Activated CD4-positive, alpha-beta T cell treated with anti-CD3 and anti-CD28 coated beads for 36 hours (primary cell): ENCODE measurements at regions of chr1 and their contacts with region 1.

Region 1: GRCh38 chr1:19882111-19883071 is at the start of gene OTUD3:
- DNase-seq: peak; percentile 96
- ATAC-seq: peak; percentile 98
- H3K4me3 Mint-ChIP-seq: peak within 1 kb of the TSS; percentile 79
- H3K27ac Mint-ChIP-seq: peak within 1 kb of the TSS; percentile 76
- H3K4me1 Mint-ChIP-seq: peaks cover 36% of the 10 kb centered on the region
- H3K27me3 Mint-ChIP-seq: peaks cover 4% of the 10 kb centered on the region
- total RNA-seq, gene OTUD3: 6.6 to 9.2 TPM

Region 2: GRCh38 chr1:19179597-19180264 is 702.7 kb before region 1 on chr1:
- CTCF ChIA-PET with region 1: no interaction called
- POLR2A ChIA-PET with region 1: no interaction called
- intact Hi-C with region 1: no loop called
- DNase-seq: peak; percentile 43
- ATAC-seq: peak; percentile 89
- H3K4me3 Mint-ChIP-seq: no peak overlapping the region
- H3K27ac Mint-ChIP-seq: peak overlapping the region; percentile 72
- H3K4me1 Mint-ChIP-seq: peaks cover 29% of the 10 kb centered on the region
- H3K27me3 Mint-ChIP-seq: no peaks in the 10 kb centered on the region

Region 3: GRCh38 chr1:19762175-19762779 is 120.1 kb before region 1 on chr1:
- CTCF ChIA-PET with region 1: interaction called, 5 read pairs
- POLR2A ChIA-PET with region 1: no interaction called
- intact Hi-C with region 1: loop called in 1 of 2 experiments (anchors 1 kb)
- DNase-seq: peak; percentile 62
- ATAC-seq: no peak
- H3K4me3 Mint-ChIP-seq: no peak overlapping the region
- H3K27ac Mint-ChIP-seq: no peak overlapping the region
- H3K4me1 Mint-ChIP-seq: peaks cover 19% of the 10 kb centered on the region
- H3K27me3 Mint-ChIP-seq: no peaks in the 10 kb centered on the region

Region 4: GRCh38 chr1:19799877-19800804 is 82.2 kb before region 1 on chr1 and contains the start of gene TMCO4:
- CTCF ChIA-PET with region 1: no interaction called
- POLR2A ChIA-PET with region 1: no interaction called
- intact Hi-C with region 1: loop called in 1 of 2 experiments (anchors 1 kb)
- DNase-seq: peak; percentile 73
- ATAC-seq: peak; percentile 59
- H3K4me3 Mint-ChIP-seq: peak within 1 kb of the TSS; percentile 75
- H3K27ac Mint-ChIP-seq: peak within 1 kb of the TSS; percentile 90
- H3K4me1 Mint-ChIP-seq: peaks cover 28% of the 10 kb centered on the region
- H3K27me3 Mint-ChIP-seq: no peaks in the 10 kb centered on the region
- total RNA-seq, gene TMCO4: 13.2 to 15.6 TPM

Region 5: DNA sequence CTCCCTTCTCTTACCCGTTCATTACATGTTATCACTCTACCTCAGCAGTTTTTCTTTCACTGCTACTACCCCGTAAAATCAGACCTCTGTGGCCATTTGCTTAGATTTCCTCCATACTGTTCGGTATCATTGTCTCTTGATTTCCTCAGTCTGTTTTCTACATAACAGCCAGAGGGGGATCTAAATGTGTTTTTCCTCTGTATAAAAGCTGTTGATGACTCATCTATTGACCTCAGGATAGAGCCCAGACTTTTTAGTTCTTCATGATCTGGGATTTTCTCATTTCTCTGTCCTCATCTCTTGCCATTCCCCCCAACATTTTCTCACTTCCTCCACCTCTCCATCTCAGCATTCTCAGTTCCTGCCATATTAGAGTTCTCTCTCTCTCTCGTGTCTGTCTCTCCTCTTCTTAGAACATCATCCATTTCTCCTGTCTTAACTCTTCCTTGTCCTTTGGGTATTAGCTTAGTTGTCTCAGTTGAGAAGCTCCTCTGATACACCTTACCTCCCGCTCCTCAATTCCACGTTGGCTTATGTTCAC is 10.3 kb after region 1 on chr1:
- CTCF ChIA-PET with region 1: interaction called, 20 read pairs
- POLR2A ChIA-PET with region 1: no interaction called
- intact Hi-C with region 1: no loop called
- DNase-seq: no peak
- ATAC-seq: no peak
- H3K4me3 Mint-ChIP-seq: no peak overlapping the region
- H3K27ac Mint-ChIP-seq: no peak overlapping the region
- H3K4me1 Mint-ChIP-seq: peaks cover 10% of the 10 kb centered on the region
- H3K27me3 Mint-ChIP-seq: no peaks in the 10 kb centered on the region

Region 6: GRCh38 chr1:19936061-19936750 is 53.8 kb after region 1 on chr1:
- CTCF ChIA-PET with region 1: no interaction called
- POLR2A ChIA-PET with region 1: no interaction called
- intact Hi-C with region 1: no loop called
- DNase-seq: no peak
- ATAC-seq: no peak
- H3K4me3 Mint-ChIP-seq: no peak overlapping the region
- H3K27ac Mint-ChIP-seq: no peak overlapping the region
- H3K4me1 Mint-ChIP-seq: no peaks in the 10 kb centered on the region
- H3K27me3 Mint-ChIP-seq: no peaks in the 10 kb centered on the region

Region 7: DNA sequence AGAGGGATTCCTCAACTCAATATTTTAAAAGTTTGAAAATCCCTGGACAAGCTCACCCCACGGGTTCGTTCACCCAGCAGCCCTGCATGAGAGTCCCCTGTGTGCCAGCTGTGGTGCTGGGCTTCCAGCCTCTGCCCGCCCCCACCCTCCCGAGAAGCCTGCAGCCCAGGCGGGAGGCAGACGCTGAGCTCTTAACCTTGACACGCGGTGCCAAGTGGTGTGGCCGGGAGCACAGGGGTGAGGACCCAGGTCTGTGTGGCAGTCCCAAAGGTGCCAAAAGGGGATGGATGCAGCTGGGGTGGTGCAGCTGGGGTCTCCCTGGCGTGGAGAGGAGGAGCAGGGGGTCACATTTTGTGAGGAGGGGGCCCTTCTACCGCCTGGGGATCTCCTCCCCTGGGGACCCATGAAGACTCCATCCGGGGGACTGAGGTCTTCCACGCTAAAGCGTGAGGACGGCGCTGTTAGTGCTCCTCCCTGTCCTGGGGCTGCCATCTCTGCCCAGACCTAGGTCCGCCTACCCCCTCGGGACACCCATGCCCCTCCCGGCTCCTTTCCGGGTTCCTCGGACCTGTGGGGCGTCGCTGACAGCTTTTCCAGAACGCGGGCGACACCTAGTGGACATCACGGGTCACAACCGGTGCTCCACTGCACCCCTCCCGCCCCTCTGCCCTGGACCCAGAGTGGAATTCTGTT is 269.7 kb after region 1 on chr1:
- CTCF ChIA-PET with region 1: interaction called, 13 read pairs
- POLR2A ChIA-PET with region 1: interaction called, 3 read pairs
- intact Hi-C with region 1: loop called in 1 of 2 experiments (anchors 1 kb)
- DNase-seq: peak; percentile 88
- ATAC-seq: peak; percentile 97
- H3K4me3 Mint-ChIP-seq: peak overlapping the region; percentile 48
- H3K27ac Mint-ChIP-seq: no peak overlapping the region
- H3K4me1 Mint-ChIP-seq: peaks cover 9% of the 10 kb centered on the region
- H3K27me3 Mint-ChIP-seq: no peaks in the 10 kb centered on the region

Region 8: GRCh38 chr1:20507564-20508410 is 625.4 kb after region 1 on chr1 and contains the start of gene MUL1:
- CTCF ChIA-PET with region 1: interaction called, 3 read pairs
- POLR2A ChIA-PET with region 1: no interaction called
- intact Hi-C with region 1: loop called in 1 of 2 experiments (anchors 2 kb)
- DNase-seq: peak; percentile 96
- ATAC-seq: peak; percentile 96
- H3K4me3 Mint-ChIP-seq: peak within 1 kb of the TSS; percentile 79
- H3K27ac Mint-ChIP-seq: peak within 1 kb of the TSS; percentile 65
- H3K4me1 Mint-ChIP-seq: peaks cover 17% of the 10 kb centered on the region
- H3K27me3 Mint-ChIP-seq: peaks cover 2% of the 10 kb centered on the region
- total RNA-seq, gene MUL1: 9.0 to 13.1 TPM

Region 9: DNA sequence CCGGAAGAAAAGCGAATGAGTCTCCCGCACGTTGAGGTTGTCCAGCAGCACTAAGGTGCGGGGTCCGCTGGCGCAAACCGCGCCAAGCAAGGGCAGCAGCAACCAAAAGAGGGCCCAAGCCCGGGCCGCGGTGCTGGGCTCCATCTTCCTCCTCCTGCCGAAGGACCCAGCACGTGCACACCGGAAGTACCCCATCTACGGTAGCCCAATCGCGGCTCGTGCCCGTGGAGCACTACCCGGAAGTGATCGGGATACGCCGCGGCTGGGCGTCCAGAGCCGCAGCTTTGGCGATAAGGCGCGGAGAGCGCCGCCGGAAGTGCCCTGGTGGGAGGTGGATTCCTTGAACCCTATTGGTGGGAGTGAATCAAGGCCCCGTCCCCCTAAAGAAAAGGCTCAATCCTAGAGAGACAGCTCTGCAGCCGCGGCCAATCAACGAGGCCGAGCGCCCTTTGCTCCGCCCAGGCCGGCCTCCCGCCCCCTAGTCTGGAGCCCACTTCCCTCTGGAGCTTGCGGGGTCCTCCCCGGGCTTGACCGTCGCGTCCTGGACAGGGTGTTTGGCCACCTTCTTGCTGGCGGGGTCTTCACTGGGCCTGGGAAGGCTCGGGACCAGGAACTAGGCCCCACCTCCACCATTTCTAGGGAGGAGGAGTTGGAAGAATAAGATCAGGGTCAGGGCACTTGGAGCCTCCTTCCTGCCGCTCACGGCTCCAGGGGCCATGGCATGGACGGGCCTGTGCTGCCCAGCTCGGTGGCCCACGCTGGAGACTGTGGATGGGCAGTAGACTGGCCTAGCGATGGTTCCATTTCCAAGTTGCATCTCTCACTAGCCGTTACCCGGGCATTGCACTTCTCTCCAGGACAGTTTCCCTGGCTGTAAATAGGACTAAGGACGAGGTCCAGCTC is 779.1 kb after region 1 on chr1 and contains the start of gene DDOST:
- CTCF ChIA-PET with region 1: no interaction called
- POLR2A ChIA-PET with region 1: no interaction called
- intact Hi-C with region 1: loop called in 1 of 2 experiments (anchors 5 kb)
- DNase-seq: peak; percentile 97
- ATAC-seq: peak; percentile 97
- H3K4me3 Mint-ChIP-seq: peak within 1 kb of the TSS; percentile 91
- H3K27ac Mint-ChIP-seq: peak within 1 kb of the TSS; percentile 100
- H3K4me1 Mint-ChIP-seq: peaks cover 35% of the 10 kb centered on the region
- H3K27me3 Mint-ChIP-seq: no peaks in the 10 kb centered on the region
- total RNA-seq, gene DDOST: 112 to 136 TPM